ENCODE measurements at regions of chr13 and their contacts with region 1.

Region 1: DNA sequence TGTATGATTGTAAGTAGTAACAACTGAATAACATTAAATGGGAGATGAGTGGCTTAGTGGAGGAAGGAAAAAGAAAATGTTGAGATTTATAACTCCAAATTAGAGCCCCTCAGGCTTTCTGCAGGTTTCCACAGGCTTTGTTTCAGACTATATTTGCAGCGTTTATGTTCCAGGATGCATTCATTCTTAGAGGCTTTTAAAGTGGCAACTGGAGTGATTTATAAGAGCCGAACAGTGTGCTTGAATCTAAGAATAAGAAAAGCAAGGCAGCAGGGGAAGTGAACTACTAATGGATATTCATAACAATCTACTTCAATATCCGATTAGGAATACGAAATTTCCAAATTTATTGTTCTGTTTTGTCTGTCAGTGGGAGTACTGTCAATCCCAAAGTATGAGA is 91.0 kb downstream of the UFM1 start:
- DNase-seq: no peak
- H3K4me3 ChIP-seq: no peak overlapping the region
- H3K27ac ChIP-seq: no peak overlapping the region
- H3K4me1 ChIP-seq: no peaks in the 10 kb centered on the region
- H3K27me3 ChIP-seq: no peaks in the 10 kb centered on the region
- CTCF ChIP-seq: no peak
- EP300 ChIP-seq: no peak
- POLR2A ChIP-seq: no peak

Region 2: GRCh38 chr13:38412266-38412665 is 28.4 kb before region 1 on chr13:
- intact Hi-C with region 1: loop called in 1 of 4 experiments (anchors 1 kb)
- DNase-seq: no peak
- H3K4me3 ChIP-seq: no peak overlapping the region
- H3K27ac ChIP-seq: no peak overlapping the region
- H3K4me1 ChIP-seq: no peaks in the 10 kb centered on the region
- H3K27me3 ChIP-seq: peaks cover 3% of the 10 kb centered on the region
- CTCF ChIP-seq: no peak
- EP300 ChIP-seq: no peak
- POLR2A ChIP-seq: no peak

Region 3: DNA sequence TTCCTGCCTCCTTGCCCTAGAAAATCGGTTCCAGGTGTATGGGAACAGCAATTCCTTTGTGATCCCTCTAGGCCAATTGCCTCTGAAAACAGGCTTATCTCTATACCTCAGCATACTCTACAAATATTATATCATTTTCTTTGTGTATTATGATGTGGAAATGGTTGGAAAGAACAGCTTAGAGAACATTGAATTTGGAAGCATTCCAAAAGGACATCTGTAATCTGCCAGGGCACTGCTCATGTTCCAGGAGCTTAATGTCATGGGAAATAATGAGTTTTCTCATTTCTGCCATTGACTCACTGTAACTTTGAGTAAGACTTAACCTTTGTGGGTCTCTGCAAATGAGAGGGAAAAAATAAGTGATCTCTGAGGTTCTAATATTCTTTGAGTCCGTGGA is 56.3 kb after region 1 on chr13:
- intact Hi-C with region 1: no loop called
- DNase-seq: no peak
- H3K4me3 ChIP-seq: no peak overlapping the region
- H3K27ac ChIP-seq: no peak overlapping the region
- H3K4me1 ChIP-seq: peaks cover 2% of the 10 kb centered on the region
- H3K27me3 ChIP-seq: no peaks in the 10 kb centered on the region
- CTCF ChIP-seq: no peak
- EP300 ChIP-seq: no peak
- POLR2A ChIP-seq: no peak